GM23248 (cell line): ENCODE measurements at regions of chr20 and their contacts with region 1.

Region 1: GRCh38 chr20:32535953-32536823 is 48.9 kb downstream of the NOL4L start:
- DNase-seq: peak; percentile 39
- H3K4me3 ChIP-seq: peak overlapping the region; percentile 64
- H3K27ac ChIP-seq: no peak overlapping the region
- H3K4me1 ChIP-seq: no peaks in the 10 kb centered on the region
- H3K27me3 ChIP-seq: no peaks in the 10 kb centered on the region

Region 2: DNA sequence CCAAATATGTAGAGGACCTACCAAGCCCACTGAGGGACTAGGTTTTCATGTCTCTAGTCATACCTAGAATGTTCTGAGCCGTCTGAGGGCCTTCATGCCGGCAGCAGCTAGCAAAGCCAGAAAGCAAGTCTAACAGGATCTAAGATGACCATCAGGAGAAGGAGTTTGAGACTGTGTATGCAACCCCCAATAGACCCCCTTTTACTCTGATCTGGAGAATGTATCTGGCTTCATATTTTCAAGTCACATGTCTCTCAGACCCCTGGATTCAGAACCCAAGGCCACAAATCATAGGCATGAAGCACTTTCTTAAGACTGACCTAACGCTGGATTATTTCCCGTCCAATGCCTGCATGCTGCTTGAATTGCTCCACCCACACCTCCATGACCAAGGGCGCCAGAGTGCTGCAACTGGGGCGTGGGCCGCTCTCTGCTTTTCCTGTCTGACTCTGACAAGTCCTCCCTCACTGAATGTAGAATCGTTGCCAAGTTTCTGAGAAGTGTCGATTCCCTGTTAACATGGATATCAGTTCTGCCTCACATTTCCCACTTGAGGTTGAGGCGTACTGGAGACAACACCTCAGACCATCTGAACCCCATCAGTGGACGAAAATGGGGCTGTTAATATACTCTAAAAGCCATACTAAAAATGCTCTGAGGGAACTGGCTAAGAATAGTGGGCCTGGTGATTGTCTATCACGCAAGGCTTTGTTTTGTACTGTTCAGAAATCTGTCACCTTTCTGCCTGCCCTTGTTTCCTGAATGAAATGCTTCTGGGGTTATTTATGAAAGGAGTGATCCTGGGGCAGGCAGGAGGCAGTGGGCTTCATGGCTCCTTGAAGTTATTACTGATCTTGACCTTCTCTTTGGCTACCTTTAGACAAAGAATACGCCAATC is 202.0 kb before region 1 on chr20:
- in situ Hi-C with region 1: no loop called
- DNase-seq: no peak
- H3K4me3 ChIP-seq: no peak overlapping the region
- H3K27ac ChIP-seq: no peak overlapping the region
- H3K4me1 ChIP-seq: peaks cover 17% of the 10 kb centered on the region
- H3K27me3 ChIP-seq: no peaks in the 10 kb centered on the region

Region 3: DNA sequence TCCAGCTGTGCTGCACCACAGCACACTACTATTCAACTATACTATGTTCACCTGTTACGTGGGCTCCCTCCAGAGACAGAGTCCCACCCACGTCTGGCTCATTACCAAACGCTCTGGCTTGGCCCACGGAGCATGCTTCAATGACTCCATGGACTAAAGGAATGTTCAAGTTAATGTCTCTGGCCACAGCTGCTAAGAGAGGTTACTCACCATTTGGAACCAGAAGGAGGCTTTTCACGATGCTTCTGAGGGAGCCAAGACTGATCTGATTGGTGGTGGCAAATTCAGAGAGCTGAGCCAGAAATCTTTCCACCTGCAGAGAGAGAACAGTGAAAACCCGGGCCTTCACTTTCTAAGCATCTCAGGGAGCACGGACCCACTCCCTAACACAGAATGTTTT is 191.5 kb after region 1 on chr20:
- in situ Hi-C with region 1: no loop called
- DNase-seq: peak; percentile 93
- H3K4me3 ChIP-seq: no peak overlapping the region
- H3K27ac ChIP-seq: no peak overlapping the region
- H3K4me1 ChIP-seq: peaks cover 15% of the 10 kb centered on the region; the same call in 1 of the 2 replicates
- H3K27me3 ChIP-seq: no peaks in the 10 kb centered on the region

Region 4: GRCh38 chr20:32789896-32790750 is 253.9 kb after region 1 on chr20:
- in situ Hi-C with region 1: loop called (anchors 25 kb)
- DNase-seq: peak; percentile 81
- H3K4me3 ChIP-seq: no peak overlapping the region
- H3K27ac ChIP-seq: no peak overlapping the region
- H3K4me1 ChIP-seq: no peaks in the 10 kb centered on the region
- H3K27me3 ChIP-seq: no peaks in the 10 kb centered on the region